Panc1 (cell line): ENCODE measurements at regions of chr1 and their contacts with region 1.

Region 1: DNA sequence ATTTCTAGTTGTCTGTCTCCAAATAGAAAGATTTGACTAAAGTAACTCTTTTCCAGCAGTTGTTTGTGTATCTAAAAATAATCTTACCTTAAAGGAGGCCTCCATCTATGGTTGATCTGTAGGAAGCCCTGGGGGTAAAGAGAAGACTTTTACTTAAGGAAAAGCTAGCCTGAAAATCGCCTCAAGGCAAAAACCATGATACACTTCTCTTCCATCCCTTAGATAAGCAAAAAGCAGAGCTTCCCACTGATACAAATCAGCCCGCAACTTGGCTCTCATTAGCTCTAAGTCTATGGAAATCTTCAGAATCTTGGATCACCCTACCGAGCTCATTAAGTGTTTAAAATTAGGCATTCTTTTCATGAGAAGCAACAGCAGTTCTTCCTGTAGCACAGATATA is 577.0 kb upstream of the PTBP2 start:
- DNase-seq: no peak
- ATAC-seq: no peak
- H3K4me3 ChIP-seq: no peak overlapping the region
- H3K27ac ChIP-seq: no peak overlapping the region
- H3K4me1 ChIP-seq: no peaks in the 10 kb centered on the region
- H3K27me3 ChIP-seq: no peaks in the 10 kb centered on the region
- CTCF ChIP-seq: no peak

Region 2: GRCh38 chr1:96346708-96347107 is 202.1 kb after region 1 on chr1:
- CTCF ChIA-PET with region 1: no interaction called
- POLR2A ChIA-PET with region 1: no interaction called
- in situ Hi-C with region 1: no loop called
- intact Hi-C with region 1: no loop called
- DNase-seq: no peak
- ATAC-seq: no peak
- H3K4me3 ChIP-seq: no peak overlapping the region
- H3K27ac ChIP-seq: no peak overlapping the region
- H3K4me1 ChIP-seq: no peaks in the 10 kb centered on the region
- H3K27me3 ChIP-seq: no peaks in the 10 kb centered on the region
- CTCF ChIP-seq: no peak

Region 3: DNA sequence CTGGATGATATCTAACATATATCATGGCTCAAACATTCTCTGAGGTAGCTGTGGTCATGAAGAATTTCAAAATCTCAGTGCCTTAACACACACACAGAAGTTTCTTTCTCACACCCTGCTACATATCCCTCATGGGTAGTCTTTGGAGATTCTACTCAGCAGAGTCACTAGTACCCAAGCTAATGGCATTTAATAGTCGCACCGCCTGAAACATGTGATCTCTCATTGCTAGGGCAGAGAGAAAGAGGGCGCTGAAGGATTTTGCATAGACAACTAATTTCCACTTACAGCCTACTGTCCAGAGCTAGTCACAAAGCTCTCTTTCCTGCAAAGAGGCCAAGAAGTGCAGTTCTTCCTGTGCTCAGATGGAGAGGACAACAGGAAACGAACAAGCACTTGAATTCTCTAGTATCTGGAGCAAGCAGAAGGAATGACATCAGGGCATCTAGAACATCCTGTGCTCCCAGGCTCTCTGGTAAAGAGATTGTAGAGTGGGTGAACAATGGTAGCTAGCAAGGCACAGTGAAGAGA is 393.5 kb after region 1 on chr1:
- CTCF ChIA-PET with region 1: no interaction called
- POLR2A ChIA-PET with region 1: interaction called, 12 read pairs
- in situ Hi-C with region 1: no loop called
- intact Hi-C with region 1: no loop called
- DNase-seq: no peak
- ATAC-seq: no peak
- H3K4me3 ChIP-seq: no peak overlapping the region
- H3K27ac ChIP-seq: no peak overlapping the region
- H3K4me1 ChIP-seq: no peaks in the 10 kb centered on the region
- H3K27me3 ChIP-seq: no peaks in the 10 kb centered on the region
- CTCF ChIP-seq: peak; percentile 15; the same call in 1 of the 2 replicates